Left ventricle myocardium inferior (tissue), 1 donor: ENCODE measurements at regions of chr15 and their contacts with region 1.

Region 1: GRCh38 chr15:68298882-68299381 is 21.4 kb downstream of the FEM1B start:
- DNase-seq: no peak
- H3K4me3 ChIP-seq: peak overlapping the region; percentile 51
- H3K27ac ChIP-seq: peak overlapping the region; percentile 60
- H3K4me1 ChIP-seq: peaks cover 50% of the 10 kb centered on the region
- H3K27me3 ChIP-seq: no peaks in the 10 kb centered on the region
- CTCF ChIP-seq: no peak

Region 2: GRCh38 chr15:68249058-68249713 is 49.7 kb before region 1 on chr15:
- intact Hi-C with region 1: loop called (anchors 10 kb)
- DNase-seq: no peak
- H3K4me3 ChIP-seq: no peak overlapping the region
- H3K27ac ChIP-seq: no peak overlapping the region
- H3K4me1 ChIP-seq: peaks cover 5% of the 10 kb centered on the region
- H3K27me3 ChIP-seq: no peaks in the 10 kb centered on the region
- CTCF ChIP-seq: no peak

Region 3: DNA sequence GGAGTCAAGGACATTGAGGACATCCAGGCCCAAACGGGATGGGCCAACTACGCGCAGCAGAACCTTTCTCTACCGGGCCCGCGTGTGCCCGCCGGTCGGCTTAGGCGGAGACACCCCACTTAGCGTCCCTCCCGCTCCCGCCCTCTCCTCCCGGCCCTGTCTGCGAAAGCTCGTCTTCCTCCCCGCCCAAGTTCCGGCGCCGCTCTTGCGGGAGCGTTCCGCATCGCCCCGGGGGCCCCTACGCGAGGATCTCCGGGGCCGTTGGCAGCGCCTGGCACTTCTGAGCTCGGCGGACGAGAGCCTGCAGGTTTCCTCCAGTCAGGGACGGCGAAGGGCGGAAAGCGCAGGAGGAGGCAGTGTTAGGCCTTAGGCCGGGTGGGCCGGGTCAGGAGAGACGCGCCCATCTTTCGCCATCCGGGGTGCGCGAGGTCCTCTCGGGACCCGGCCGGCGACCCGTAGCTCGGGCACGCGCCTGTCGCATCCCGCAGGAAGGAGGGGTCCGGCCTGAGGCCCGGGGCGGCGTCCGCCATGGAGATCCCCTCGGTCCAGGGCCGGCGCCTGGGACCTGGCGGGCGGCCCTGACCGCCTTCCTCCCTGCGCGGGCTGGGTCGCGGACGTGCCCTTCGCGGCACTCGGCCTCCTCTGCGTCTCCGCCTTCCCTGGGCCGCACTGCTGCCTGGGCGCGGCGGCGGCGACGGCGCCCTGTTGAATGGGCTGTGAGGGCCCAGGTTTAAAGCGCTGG is 21.2 kb before region 1 on chr15 and contains the start of gene FEM1B:
- intact Hi-C with region 1: no loop called
- DNase-seq: peak; percentile 91
- H3K4me3 ChIP-seq: peak within 1 kb of the TSS; percentile 74
- H3K27ac ChIP-seq: peak within 1 kb of the TSS; percentile 99
- H3K4me1 ChIP-seq: peaks cover 82% of the 10 kb centered on the region
- H3K27me3 ChIP-seq: no peaks in the 10 kb centered on the region
- CTCF ChIP-seq: peak; percentile 54
- total RNA-seq, gene FEM1B: 46.7 TPM